CD4-positive, alpha-beta memory T cell (primary cell): ENCODE measurements at regions of chr19 and their contacts with region 1.

Region 1: DNA sequence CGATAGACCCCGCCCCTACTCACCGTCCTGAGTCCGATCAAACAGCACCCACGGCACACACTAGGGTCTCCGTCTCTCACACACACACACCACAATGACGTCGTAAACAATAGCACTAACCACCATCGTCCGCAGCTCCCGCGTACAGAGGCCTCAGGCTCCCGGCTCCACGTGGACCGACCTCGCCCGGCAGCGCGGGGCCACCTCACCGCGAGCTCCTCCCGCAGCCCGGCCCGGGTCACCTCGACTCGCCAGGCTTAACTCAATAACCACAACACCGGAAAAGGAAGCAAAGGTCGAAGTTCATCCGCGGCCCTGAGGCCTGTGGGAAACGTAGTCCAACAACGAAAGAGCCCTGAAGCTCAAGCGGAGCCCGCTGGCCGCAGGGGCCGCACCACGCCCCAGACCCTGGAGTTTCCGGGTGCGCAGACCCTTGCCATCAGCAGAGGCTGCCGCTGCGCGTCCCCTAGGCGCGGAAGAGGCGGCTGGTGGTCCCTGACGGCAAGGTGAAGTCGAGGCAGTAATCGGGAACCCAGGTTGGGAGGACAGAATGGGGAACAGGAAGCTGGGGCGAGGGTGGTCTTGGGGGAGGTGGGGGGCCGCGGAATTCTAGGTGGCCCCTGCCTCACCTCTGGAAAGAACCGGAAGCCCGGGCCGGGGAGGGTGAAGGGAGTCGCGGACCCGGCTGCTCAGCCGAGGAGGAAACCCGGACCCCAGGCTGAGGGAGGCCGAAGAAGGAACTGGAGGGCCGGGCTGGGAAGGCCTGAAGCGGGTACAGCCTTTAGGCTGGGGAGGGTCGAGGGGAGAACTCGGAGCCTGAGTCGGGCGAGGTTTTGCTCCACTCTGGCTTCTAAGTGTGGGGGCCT is at the start of gene ZNF529:
- DNase-seq: peak; percentile 86 to 98 (median 89)
- H3K4me3 ChIP-seq: peak within 1 kb of the TSS; percentile 70 to 86
- H3K4me3 Mint-ChIP-seq: peak within 1 kb of the TSS; percentile 89 to 98 (median 96)
- H3K27ac ChIP-seq: peak within 1 kb of the TSS; percentile 95
- H3K27ac Mint-ChIP-seq: peak within 1 kb of the TSS; percentile 93 to 100 (median 98)
- H3K4me1 ChIP-seq: peaks cover 22% of the 10 kb centered on the region
- H3K4me1 Mint-ChIP-seq: peaks cover 25 to 39% (median 34%) of the 10 kb centered on the region in 4 donors
- H3K27me3 ChIP-seq: no peaks in the 10 kb centered on the region
- H3K27me3 Mint-ChIP-seq: no peaks in the 10 kb centered on the region
- total RNA-seq, gene ZNF529: 32.8 to 33.5 TPM

Region 2: GRCh38 chr19:36665832-36666231 is 92.6 kb after region 1 on chr19:
- CTCF ChIA-PET with region 1: no interaction called
- POLR2A ChIA-PET with region 1: interaction called, 5 read pairs
- intact Hi-C with region 1: loop called (anchors 10 kb)
- DNase-seq: no peak
- H3K4me3 ChIP-seq: peak overlapping the region; percentile 76 to 100
- H3K4me3 Mint-ChIP-seq: peak overlapping the region; percentile 94 to 100 (median 99)
- H3K27ac ChIP-seq: peak overlapping the region; percentile 71
- H3K27ac Mint-ChIP-seq: peak overlapping the region in 6 of 7 donors; percentile 5 to 99 (median 94)
- H3K4me1 ChIP-seq: peaks cover 28% of the 10 kb centered on the region
- H3K4me1 Mint-ChIP-seq: peaks cover 24 to 45% (median 31%) of the 10 kb centered on the region in 4 donors
- H3K27me3 ChIP-seq: no peaks in the 10 kb centered on the region
- H3K27me3 Mint-ChIP-seq: no peaks in the 10 kb centered on the region